Cardiac septum (tissue), 1 donor: ENCODE measurements at regions of chr2 and their contacts with region 1.

Region 1: GRCh38 chr2:66439812-66440542 is 5.1 kb downstream of the MEIS1 start:
- DNase-seq: no peak

Region 2: DNA sequence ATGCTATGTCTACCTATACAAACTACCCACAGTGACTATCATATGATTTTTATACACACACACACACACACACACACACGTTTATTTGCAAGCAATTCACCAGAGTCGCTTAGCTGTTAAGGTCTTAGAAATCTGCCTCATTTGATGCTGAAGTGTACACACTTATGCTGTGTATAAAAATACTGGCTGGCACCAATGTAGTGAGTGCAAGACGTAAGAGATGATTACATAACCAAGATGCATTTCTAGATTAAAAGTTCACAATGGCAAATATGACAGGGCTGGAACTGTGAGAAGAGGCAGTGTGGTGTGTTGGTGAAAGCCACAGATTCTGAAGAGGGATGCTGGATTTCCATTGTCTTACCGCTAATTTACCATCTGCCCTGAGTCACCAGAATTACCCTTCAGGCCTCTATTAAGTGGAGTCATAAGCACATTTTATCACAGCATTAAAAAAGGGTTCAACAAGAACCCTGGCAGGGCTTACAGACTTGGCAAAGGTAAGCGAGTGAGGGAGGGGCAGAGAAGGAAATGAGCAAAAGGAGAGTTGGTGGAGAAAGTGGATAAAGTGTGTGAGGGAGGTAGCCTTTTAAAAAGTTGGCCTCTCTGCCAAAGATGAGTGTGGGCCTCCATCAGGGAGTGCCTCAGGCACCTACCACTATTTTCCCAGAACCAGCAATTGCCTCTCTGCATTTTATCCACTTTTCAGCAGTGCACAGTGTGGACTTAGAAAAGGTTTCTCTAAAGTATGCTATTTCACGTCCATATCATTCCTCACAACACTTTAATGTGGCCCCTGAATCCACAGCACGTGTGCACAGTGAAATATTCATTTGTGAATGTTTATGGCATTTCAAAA is 16.4 kb after region 1 on chr2:
- intact Hi-C with region 1: no loop called
- DNase-seq: no peak

Region 3: DNA sequence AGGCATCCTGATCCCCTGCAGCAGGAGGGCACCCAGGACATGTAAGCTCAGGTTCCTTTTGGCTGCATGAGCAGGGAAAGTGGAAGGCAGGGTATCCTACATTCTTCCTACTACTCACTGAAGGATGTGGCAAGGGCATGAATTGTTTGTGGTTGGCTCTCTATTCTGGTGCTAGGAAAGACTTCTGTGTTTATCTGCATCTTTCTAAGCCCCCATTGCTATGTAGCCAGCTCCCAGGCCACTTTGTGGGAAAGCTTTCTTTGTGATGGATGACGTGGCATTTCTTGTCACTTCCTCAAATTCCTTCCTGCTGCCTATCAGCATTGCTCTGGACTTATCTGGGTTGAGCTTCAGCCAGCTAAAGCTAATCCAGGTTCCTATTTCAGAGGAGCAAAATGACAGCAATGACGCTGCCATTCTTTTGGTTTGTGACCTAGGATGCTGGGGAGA is 41.1 kb after region 1 on chr2:
- intact Hi-C with region 1: loop called (anchors 5 kb)
- DNase-seq: no peak

Region 4: DNA sequence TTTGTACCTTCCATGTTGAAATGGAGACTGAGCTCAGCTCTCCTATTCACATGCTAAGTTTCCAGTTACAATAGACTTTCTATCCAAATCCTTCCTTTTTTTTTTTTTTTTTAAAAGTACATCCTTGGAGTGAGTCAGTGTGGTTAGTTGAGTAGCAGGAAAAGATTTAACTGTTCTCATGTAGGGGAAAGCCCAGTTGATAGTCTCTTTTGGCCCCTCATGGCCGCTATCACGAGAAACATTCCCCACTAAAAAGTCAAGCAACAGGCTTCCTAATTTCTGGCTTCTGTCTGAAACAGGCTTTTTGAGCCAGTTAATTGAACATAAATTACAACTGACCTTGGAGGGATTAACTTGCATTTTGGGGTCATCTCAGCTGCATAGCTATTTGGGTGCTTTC is 156.3 kb after region 1 on chr2:
- intact Hi-C with region 1: no loop called
- DNase-seq: no peak

Region 5: GRCh38 chr2:66813976-66814375 is 374.0 kb after region 1 on chr2:
- intact Hi-C with region 1: no loop called
- DNase-seq: no peak